CD4-positive, alpha-beta memory T cell (primary cell): ENCODE measurements at regions of chr9 and their contacts with region 1.

Region 1: GRCh38 chr9:85702726-85703289 is 38.9 kb downstream of the AGTPBP1 start:
- DNase-seq: no peak
- H3K4me3 ChIP-seq: no peak overlapping the region
- H3K4me3 Mint-ChIP-seq: no peak overlapping the region
- H3K27ac ChIP-seq: no peak overlapping the region
- H3K27ac Mint-ChIP-seq: peak overlapping the region in 1 of 7 donors; percentile 24
- H3K4me1 ChIP-seq: no peaks in the 10 kb centered on the region
- H3K4me1 Mint-ChIP-seq: peaks cover 22 to 48% (median 30%) of the 10 kb centered on the region in 4 donors
- H3K27me3 ChIP-seq: no peaks in the 10 kb centered on the region
- H3K27me3 Mint-ChIP-seq: no peaks in the 10 kb centered on the region

Region 2: GRCh38 chr9:85716031-85716877 is 13.4 kb after region 1 on chr9:
- CTCF ChIA-PET with region 1: interaction called, 16 read pairs
- POLR2A ChIA-PET with region 1: interaction called, 3 read pairs
- intact Hi-C with region 1: loop called (anchors 2 kb)
- DNase-seq: no peak
- H3K4me3 ChIP-seq: no peak overlapping the region
- H3K4me3 Mint-ChIP-seq: peak overlapping the region in 5 of 8 donors; percentile 1 to 44 (median 15)
- H3K27ac ChIP-seq: no peak overlapping the region
- H3K27ac Mint-ChIP-seq: peak overlapping the region in 6 of 7 donors; percentile 15 to 85 (median 54)
- H3K4me1 ChIP-seq: peaks cover 15% of the 10 kb centered on the region
- H3K4me1 Mint-ChIP-seq: peaks cover 37 to 61% (median 49%) of the 10 kb centered on the region in 4 donors
- H3K27me3 ChIP-seq: no peaks in the 10 kb centered on the region
- H3K27me3 Mint-ChIP-seq: no peaks in the 10 kb centered on the region

Region 3: DNA sequence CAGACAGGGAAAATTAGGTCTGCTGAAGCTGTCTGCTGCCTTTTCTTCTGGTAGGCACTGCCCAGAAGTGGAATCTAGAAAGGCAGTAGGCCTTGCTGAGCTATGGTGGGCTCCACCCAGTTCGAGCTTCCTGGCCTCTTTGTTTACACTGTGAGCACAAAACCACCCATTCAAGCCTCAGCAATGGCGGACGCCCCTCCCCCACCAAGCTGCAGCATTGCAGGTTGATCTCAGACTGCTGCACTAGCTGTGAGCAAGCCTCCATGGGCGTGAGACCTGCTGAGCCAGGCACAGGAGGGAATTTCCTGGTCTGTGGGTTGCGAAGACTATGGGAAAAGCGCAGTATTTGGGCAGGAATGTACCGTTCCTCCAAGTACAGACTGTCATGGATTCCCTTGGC is 20.4 kb after region 1 on chr9:
- CTCF ChIA-PET with region 1: interaction called, 25 read pairs
- POLR2A ChIA-PET with region 1: interaction called, 5 read pairs
- intact Hi-C with region 1: no loop called
- DNase-seq: peak; percentile 67 to 80 (median 71)
- H3K4me3 ChIP-seq: no peak overlapping the region
- H3K4me3 Mint-ChIP-seq: peak overlapping the region; percentile 18 to 77 (median 70)
- H3K27ac ChIP-seq: peak overlapping the region; percentile 31
- H3K27ac Mint-ChIP-seq: peak overlapping the region; percentile 63 to 90 (median 87)
- H3K4me1 ChIP-seq: peaks cover 39% of the 10 kb centered on the region
- H3K4me1 Mint-ChIP-seq: peaks cover 45 to 84% (median 68%) of the 10 kb centered on the region in 4 donors
- H3K27me3 ChIP-seq: no peaks in the 10 kb centered on the region
- H3K27me3 Mint-ChIP-seq: no peaks in the 10 kb centered on the region

Region 4: GRCh38 chr9:86079865-86080469 is 377.2 kb after region 1 on chr9:
- CTCF ChIA-PET with region 1: no interaction called
- POLR2A ChIA-PET with region 1: no interaction called
- intact Hi-C with region 1: no loop called
- DNase-seq: no peak
- H3K4me3 ChIP-seq: no peak overlapping the region
- H3K4me3 Mint-ChIP-seq: no peak overlapping the region
- H3K27ac ChIP-seq: no peak overlapping the region
- H3K27ac Mint-ChIP-seq: no peak overlapping the region
- H3K4me1 ChIP-seq: no peaks in the 10 kb centered on the region
- H3K4me1 Mint-ChIP-seq: no peaks in the 10 kb centered on the region
- H3K27me3 ChIP-seq: no peaks in the 10 kb centered on the region
- H3K27me3 Mint-ChIP-seq: peaks cover under 1 to 1% of the 10 kb centered on the region in 2 donors